ENCODE measurements at regions of chr18 and their contacts with region 1.

Region 1: GRCh38 chr18:3230401-3231334 is 10.9 kb upstream of the MYOM1 start:
- DNase-seq: peak; percentile 34
- H3K27ac ChIP-seq: no peak overlapping the region
- CTCF ChIP-seq: no peak

Region 2: GRCh38 chr18:2932247-2933181 is 298.2 kb before region 1 on chr18:
- CTCF ChIA-PET with region 1: no interaction called
- POLR2A ChIA-PET with region 1: interaction called, 15 read pairs
- DNase-seq: peak; percentile 65
- H3K27ac ChIP-seq: no peak overlapping the region
- CTCF ChIP-seq: peak; percentile 73

Region 3: DNA sequence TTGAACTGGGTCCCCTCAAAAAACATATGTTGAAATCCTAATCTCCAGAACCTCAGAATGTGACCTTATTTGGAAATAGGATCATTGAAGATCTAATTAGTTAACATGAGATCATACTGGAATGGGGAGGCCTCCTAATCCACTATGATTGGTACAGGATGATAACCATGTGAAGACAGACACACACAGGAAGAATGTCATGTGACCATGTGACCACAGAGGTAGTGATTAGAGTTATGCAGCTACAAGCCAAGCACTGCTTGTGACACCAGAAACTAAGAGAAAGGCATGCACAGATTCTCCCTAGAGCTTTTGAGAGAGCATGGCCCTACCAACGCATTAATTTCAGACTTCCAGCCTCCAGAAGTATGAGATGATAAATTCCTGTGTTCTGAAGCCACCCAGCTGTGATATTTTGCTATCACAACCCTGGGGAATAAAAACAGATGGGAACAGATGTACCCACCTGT is 172.3 kb after region 1 on chr18:
- CTCF ChIA-PET with region 1: no interaction called
- POLR2A ChIA-PET with region 1: no interaction called
- DNase-seq: no peak
- H3K27ac ChIP-seq: no peak overlapping the region
- CTCF ChIP-seq: no peak